ENCODE measurements at regions of chr10 and their contacts with region 1.

Region 1: GRCh38 chr10:74977913-74978847 is 133.3 kb upstream of the SAMD8 start:
- DNase-seq: peak; percentile 78
- ATAC-seq: peak; percentile 90
- H3K4me3 Mint-ChIP-seq: peak overlapping the region; percentile 62
- H3K27ac Mint-ChIP-seq: peak overlapping the region; percentile 44
- H3K4me1 Mint-ChIP-seq: peaks cover 53% of the 10 kb centered on the region
- H3K27me3 Mint-ChIP-seq: no peaks in the 10 kb centered on the region

Region 2: GRCh38 chr10:74875952-74876351 is 102.2 kb before region 1 on chr10:
- CTCF ChIA-PET with region 1: no interaction called
- POLR2A ChIA-PET with region 1: no interaction called
- DNase-seq: no peak
- ATAC-seq: no peak
- H3K4me3 Mint-ChIP-seq: no peak overlapping the region
- H3K27ac Mint-ChIP-seq: no peak overlapping the region
- H3K4me1 Mint-ChIP-seq: peaks cover 26% of the 10 kb centered on the region
- H3K27me3 Mint-ChIP-seq: no peaks in the 10 kb centered on the region

Region 3: GRCh38 chr10:74967911-74968645 is 10.1 kb before region 1 on chr10:
- CTCF ChIA-PET with region 1: interaction called, 10 read pairs
- POLR2A ChIA-PET with region 1: interaction called, 11 read pairs
- DNase-seq: no peak
- ATAC-seq: peak; percentile 47
- H3K4me3 Mint-ChIP-seq: peak overlapping the region; percentile 61
- H3K27ac Mint-ChIP-seq: peak overlapping the region; percentile 86
- H3K4me1 Mint-ChIP-seq: peaks cover 37% of the 10 kb centered on the region
- H3K27me3 Mint-ChIP-seq: no peaks in the 10 kb centered on the region

Region 4: DNA sequence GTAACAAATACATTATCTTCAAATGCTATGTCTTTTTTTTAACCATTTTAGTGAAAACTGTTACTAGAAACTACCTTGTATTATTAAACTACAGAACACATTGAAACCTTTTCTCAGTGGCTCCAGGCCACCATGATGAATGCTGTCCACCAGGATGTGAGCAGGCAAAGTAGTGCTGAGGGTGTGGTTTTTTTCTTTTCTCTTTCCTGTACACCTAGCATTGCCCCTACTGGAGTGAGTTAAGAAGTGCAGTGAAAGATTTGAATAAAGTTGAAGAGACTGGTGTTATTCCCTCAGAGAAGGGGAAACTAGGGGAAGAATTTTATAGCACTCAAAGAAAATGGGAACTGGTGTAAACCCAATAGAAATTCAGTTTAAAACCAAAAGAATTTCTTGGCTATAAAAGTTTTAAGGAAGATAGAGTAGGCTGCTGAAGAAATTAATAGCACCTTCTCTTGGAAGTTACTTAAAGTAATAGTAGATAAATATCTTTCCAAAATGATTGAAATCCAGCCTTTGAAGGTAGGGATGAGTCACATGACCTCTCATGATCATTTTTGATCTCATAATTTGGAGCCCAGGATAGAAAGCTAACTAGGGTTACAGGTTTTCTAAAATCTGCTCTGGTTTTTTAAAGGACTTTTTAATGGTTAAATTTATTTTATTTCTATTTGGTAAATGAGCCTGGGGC is 13.4 kb after region 1 on chr10:
- CTCF ChIA-PET with region 1: interaction called, 10 read pairs
- POLR2A ChIA-PET with region 1: no interaction called
- DNase-seq: no peak
- ATAC-seq: peak; percentile 81
- H3K4me3 Mint-ChIP-seq: no peak overlapping the region
- H3K27ac Mint-ChIP-seq: no peak overlapping the region
- H3K4me1 Mint-ChIP-seq: peaks cover 43% of the 10 kb centered on the region
- H3K27me3 Mint-ChIP-seq: no peaks in the 10 kb centered on the region

Region 5: DNA sequence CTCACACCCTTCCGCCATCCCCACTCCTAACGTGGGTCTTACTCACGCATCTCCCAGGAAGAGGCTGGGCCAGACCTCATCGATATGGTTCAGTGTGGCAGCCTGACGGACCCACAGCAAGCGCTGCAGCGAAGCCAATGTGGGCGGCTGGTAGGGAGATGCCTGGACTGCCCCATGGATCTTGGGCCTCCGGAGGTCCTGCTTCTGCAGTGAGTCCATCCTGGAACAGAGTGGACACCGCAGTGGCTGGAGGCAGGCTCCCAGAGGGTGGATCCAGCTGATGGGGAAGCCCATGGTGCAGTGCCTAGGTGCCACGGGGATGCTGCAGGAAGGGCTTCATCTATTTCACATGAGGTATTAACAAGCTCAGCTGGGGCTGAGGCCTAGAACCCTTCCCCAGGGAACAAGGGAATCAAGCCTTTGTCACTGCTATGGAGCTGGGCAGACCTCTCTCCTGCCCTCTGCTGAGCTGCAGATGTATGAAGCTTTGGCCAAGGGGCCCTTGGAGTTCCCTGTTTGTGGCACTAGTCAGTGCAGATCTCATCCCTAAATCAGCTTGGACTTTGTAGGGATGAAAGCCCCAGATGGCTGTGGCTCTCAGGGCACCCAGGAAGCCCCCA is 119.6 kb after region 1 on chr10:
- CTCF ChIA-PET with region 1: no interaction called
- POLR2A ChIA-PET with region 1: no interaction called
- DNase-seq: no peak
- ATAC-seq: no peak
- H3K4me3 Mint-ChIP-seq: no peak overlapping the region
- H3K27ac Mint-ChIP-seq: no peak overlapping the region
- H3K4me1 Mint-ChIP-seq: peaks cover 6% of the 10 kb centered on the region
- H3K27me3 Mint-ChIP-seq: no peaks in the 10 kb centered on the region

Region 6: DNA sequence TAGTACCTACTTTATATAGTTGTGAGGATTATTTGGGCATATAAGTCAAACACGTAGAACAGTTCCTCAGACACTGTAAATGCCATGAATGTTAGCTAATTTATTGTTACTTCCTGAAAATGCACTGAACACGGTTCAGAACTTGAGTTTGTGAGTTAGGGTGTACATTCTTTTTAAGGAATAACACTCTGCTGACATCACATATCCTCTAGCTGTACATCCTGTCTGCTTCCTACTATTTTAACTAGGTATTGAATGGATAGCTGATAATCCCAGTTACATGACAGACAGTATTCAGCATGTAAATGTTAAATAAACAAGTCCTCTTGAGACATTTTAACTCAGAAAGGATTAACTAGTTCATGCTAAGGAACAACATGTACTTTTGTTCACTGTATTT is 149.3 kb after region 1 on chr10:
- CTCF ChIA-PET with region 1: no interaction called
- POLR2A ChIA-PET with region 1: no interaction called
- DNase-seq: no peak
- ATAC-seq: no peak
- H3K4me3 Mint-ChIP-seq: no peak overlapping the region
- H3K27ac Mint-ChIP-seq: no peak overlapping the region
- H3K4me1 Mint-ChIP-seq: peaks cover 49% of the 10 kb centered on the region
- H3K27me3 Mint-ChIP-seq: no peaks in the 10 kb centered on the region